T-cell (primary cell): ENCODE measurements at regions of chr10 and their contacts with region 1.

Region 1: GRCh38 chr10:72331601-72332422 is 22.9 kb downstream of the DNAJB12 start:
- DNase-seq: peak; percentile 65 to 97 (median 94)
- ATAC-seq: peak; percentile 68 to 77 (median 74)
- H3K4me3 ChIP-seq: peak overlapping the region; percentile 28 to 42
- H3K4me3 Mint-ChIP-seq: peak overlapping the region; percentile 64 to 85 (median 72)
- H3K27ac ChIP-seq: peak overlapping the region; percentile 90
- H3K27ac Mint-ChIP-seq: peak overlapping the region; percentile 92 to 95
- H3K4me1 ChIP-seq: peaks cover 81 to 100% of the 10 kb centered on the region in 2 experiments
- H3K4me1 Mint-ChIP-seq: peaks cover 89 to 95% (median 93%) of the 10 kb centered on the region in 3 donors
- H3K27me3 ChIP-seq: peaks cover 0 to 2% of the 10 kb centered on the region in 2 experiments
- H3K27me3 Mint-ChIP-seq: no peaks in the 10 kb centered on the region

Region 2: DNA sequence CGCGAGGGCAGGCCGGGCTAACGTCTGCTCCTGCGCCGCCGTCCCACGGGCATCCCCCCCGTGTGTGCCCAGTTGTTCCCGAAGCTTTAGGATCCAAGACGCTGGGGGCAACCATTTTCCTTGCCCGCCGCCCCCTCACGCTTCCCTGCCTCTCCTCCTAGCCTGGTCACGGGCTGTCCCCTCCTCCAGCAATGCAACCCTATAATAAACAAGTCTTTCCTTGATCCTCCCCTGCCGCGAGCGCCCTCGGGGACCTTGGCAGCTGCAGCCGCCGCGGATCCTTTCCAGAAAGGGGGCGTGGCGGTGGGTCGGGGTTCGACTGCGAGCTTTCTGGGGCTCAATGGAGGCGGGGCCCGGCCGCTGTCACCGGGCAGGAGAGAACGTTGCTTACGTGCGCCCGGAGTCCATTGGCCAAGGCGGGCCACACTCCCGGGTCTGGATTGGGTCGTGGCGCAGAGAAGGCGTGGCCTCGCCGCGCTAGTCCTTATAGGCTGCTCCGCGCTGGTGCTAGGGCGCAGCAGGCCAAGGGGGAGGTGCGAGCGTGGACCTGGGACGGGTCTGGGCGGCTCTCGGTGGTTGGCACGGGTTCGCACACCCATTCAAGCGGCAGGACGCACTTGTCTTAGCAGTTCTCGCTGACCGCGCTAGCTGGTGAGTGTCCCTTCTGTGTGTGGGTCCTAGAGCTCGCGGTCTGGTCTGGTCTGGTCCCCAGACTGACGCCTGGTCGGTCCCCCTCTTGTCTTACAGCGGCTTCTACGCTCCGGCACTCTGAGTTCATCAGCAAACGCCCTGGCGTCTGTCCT is 58.2 kb before region 1 on chr10 and contains the start of gene DDIT4:
- CTCF ChIA-PET with region 1: interaction called, 8 to 25 read pairs
- POLR2A ChIA-PET with region 1: interaction called, 7 read pairs
- DNase-seq: peak; percentile 88 to 99 (median 98)
- ATAC-seq: peak; percentile 89 to 95 (median 93)
- H3K4me3 ChIP-seq: peak within 1 kb of the TSS; percentile 87 to 95
- H3K4me3 Mint-ChIP-seq: peak within 1 kb of the TSS; percentile 92 to 99 (median 92)
- H3K27ac ChIP-seq: peak within 1 kb of the TSS; percentile 88
- H3K27ac Mint-ChIP-seq: peak within 1 kb of the TSS; percentile 93
- H3K4me1 ChIP-seq: peaks cover 7 to 48% of the 10 kb centered on the region in 2 experiments
- H3K4me1 Mint-ChIP-seq: peaks cover 45 to 58% (median 50%) of the 10 kb centered on the region in 3 donors
- H3K27me3 ChIP-seq: no peaks in the 10 kb centered on the region
- H3K27me3 Mint-ChIP-seq: no peaks in the 10 kb centered on the region
- total RNA-seq, gene DDIT4: 39.9 to 326 (median 52.1) TPM

Region 3: GRCh38 chr10:72319416-72320254 is 12.2 kb before region 1 on chr10:
- CTCF ChIA-PET with region 1: interaction called, 3 to 8 read pairs
- POLR2A ChIA-PET with region 1: interaction called, 4 to 23 read pairs
- DNase-seq: peak; percentile 72 to 94 (median 85)
- ATAC-seq: peak; percentile 81 to 84 (median 82)
- H3K4me3 ChIP-seq: peak overlapping the region; percentile 40 to 50
- H3K4me3 Mint-ChIP-seq: peak overlapping the region; percentile 66 to 79 (median 72)
- H3K27ac ChIP-seq: peak overlapping the region; percentile 95
- H3K27ac Mint-ChIP-seq: peak overlapping the region; percentile 97 to 99
- H3K4me1 ChIP-seq: peaks cover 69 to 90% of the 10 kb centered on the region in 2 experiments
- H3K4me1 Mint-ChIP-seq: peaks cover 79 to 87% (median 86%) of the 10 kb centered on the region in 3 donors
- H3K27me3 ChIP-seq: no peaks in the 10 kb centered on the region
- H3K27me3 Mint-ChIP-seq: no peaks in the 10 kb centered on the region